SK-N-SH (cell line): ENCODE measurements at regions of chr6 and their contacts with region 1.

Region 1: DNA sequence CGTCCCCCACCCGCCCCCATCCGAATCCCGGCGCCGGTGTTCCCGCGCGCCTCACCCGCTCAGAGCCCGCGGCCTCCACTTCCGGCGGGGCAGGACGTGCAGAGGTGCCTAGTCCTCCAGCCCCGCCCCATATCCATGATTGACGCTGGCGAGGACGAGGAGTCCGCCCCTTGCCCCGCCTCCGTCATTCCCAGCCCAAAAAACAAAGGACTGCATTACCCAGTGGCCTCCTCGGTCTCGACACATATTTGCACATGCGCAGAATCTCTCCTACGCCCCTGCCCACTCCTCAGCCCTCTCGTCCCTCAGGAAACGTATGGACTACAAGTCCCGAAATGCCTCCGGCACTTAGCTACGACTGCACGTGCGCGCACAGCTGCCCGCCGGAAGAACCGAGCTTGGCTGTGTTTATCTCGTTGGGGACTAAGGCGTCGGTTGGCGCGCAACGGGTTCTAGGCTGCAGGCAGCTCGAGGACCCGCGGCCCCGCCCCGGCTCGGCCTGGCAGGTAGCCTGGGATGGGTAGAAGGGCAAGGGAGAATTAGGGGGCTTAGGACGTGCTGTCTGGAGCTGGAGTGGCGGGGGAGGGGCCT is at the starts of genes KLHDC3 and MEA1:
- DNase-seq: peak; percentile 98
- H3K4me3 ChIP-seq: peak within 1 kb of the TSS; percentile 47 to 85
- H3K27ac ChIP-seq: peak within 1 kb of the TSS; percentile 57 to 75
- H3K4me1 ChIP-seq: peaks cover 3 to 36% of the 10 kb centered on the region in 2 experiments; a peak in 3 of 4 replicates
- H3K27me3 ChIP-seq: no peaks in the 10 kb centered on the region
- CTCF ChIP-seq: no peak
- EP300 ChIP-seq: no peak
- RAD21 ChIP-seq: no peak
- polyA plus RNA-seq, gene KLHDC3: 59.1 and 74.1 TPM in 2 replicates
- polyA plus RNA-seq, gene MEA1: 160 and 171 TPM in 2 replicates

Region 2: GRCh38 chr6:42978839-42979522 is 35.0 kb before region 1 on chr6 and contains the start of gene PEX6:
- CTCF ChIA-PET with region 1: interaction called, 3 read pairs
- POLR2A ChIA-PET with region 1: interaction called, 12 read pairs
- DNase-seq: peak; percentile 96
- H3K4me3 ChIP-seq: peak within 1 kb of the TSS; percentile 66 to 81
- H3K27ac ChIP-seq: peak within 1 kb of the TSS; percentile 80 to 86
- H3K4me1 ChIP-seq: peaks cover 0 to 10% of the 10 kb centered on the region in 2 experiments; a peak in 2 of 4 replicates
- H3K27me3 ChIP-seq: no peaks in the 10 kb centered on the region
- CTCF ChIP-seq: no peak
- EP300 ChIP-seq: 0 out of 4 replicates have a peak, but pooled peaks of 1 of the 2 experiments have one; percentile 7
- RAD21 ChIP-seq: no peak
- polyA plus RNA-seq, gene PEX6: 12.5 and 15.3 TPM in 2 replicates

Region 3: DNA sequence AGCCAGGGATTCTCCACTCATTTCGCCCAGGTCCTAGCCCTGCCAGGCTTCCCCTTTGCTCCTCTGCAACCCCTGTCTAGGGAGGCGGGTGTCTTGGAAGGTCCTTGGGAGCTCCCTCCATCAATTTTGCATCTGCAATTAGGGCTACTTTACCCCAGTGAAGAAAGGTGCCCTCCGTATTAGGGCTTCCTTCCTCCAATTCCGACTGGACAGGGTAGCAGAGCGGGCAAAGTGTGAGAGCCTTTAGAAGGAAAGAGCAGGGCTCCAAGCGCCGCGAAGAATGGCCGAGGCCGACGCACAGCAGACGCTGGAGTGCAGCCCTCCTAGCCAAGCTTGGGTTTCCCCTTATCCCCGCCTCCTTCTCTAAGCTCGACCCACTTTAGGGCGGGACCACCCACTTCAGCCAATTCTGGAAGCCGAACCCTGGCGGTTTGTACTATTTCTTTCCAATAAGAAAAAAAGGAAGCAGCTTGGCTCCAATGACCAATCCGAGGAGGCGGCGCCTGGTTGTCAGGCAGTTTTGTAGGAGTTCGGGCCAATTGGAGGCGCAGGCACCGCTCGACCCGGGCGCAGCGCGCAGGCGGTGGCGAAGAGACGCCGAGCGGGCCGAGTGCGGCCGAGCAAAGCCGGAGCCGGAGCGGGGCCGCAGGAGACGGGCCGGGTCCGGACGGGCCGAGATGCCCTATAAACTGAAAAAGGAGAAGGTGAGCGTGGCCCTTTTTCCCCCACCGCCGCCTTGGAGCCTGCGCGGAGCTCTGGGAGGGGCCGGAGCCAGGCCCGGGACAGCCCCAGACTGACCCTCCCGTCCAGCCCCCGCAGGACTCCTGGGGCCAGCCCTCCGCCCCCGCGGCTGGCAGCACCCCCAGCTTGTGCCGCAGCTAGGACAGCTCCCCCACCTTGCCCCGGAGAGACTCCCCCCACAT is 29.7 kb before region 1 on chr6 and contains the start of gene PPP2R5D:
- CTCF ChIA-PET with region 1: interaction called, 4 read pairs
- POLR2A ChIA-PET with region 1: interaction called, 12 read pairs
- DNase-seq: peak; percentile 94
- H3K4me3 ChIP-seq: peak within 1 kb of the TSS; percentile 69 to 70
- H3K27ac ChIP-seq: peak within 1 kb of the TSS; percentile 66 to 93
- H3K4me1 ChIP-seq: peaks cover 20 to 24% of the 10 kb centered on the region in 2 experiments; a peak in 3 of 4 replicates
- H3K27me3 ChIP-seq: no peaks in the 10 kb centered on the region
- CTCF ChIP-seq: no peak
- EP300 ChIP-seq: no peak
- RAD21 ChIP-seq: no peak
- polyA plus RNA-seq, gene PPP2R5D: 37.6 and 38.6 TPM in 2 replicates

Region 4: DNA sequence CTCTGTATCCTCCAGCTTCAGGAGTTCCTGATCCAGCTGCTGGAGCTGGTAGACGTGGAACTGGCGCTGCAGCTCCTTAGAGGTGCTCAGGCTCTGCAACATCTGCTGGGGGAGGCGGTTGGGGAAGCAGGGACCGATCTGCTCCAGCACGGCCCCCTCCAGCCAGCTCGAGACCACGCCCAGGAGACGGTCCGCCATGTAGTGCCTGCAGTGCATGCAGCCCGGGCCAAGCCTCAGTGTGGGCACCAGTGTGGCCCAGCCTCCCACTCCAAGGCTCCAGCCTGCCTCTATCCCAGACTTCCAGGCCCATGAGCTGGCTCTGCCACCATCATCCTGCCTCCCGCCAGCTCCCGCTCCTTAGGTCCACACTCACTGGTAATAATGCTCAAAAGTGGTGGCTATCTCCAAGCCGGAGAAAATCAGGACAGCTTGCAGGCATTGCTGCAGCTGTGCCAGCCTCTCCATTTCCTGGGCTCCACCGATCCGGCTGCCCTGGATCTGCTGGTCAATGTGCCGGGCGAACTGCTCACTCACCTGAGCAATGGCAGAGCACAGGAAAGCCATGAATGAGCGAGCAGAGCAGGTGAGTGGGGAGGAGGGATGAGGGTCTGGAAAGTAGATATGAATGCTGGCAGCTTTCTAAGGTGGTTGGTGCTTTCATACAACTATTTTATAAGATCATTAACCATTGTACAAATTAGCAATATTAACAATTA is 26.8 kb after region 1 on chr6:
- CTCF ChIA-PET with region 1: no interaction called
- POLR2A ChIA-PET with region 1: no interaction called
- DNase-seq: no peak
- H3K4me3 ChIP-seq: no peak overlapping the region
- H3K27ac ChIP-seq: no peak overlapping the region
- H3K4me1 ChIP-seq: no peaks in the 10 kb centered on the region
- H3K27me3 ChIP-seq: no peaks in the 10 kb centered on the region
- CTCF ChIP-seq: no peak
- EP300 ChIP-seq: no peak
- RAD21 ChIP-seq: no peak